ENCODE measurements at regions of chr1 and their contacts with region 1.

Region 1: DNA sequence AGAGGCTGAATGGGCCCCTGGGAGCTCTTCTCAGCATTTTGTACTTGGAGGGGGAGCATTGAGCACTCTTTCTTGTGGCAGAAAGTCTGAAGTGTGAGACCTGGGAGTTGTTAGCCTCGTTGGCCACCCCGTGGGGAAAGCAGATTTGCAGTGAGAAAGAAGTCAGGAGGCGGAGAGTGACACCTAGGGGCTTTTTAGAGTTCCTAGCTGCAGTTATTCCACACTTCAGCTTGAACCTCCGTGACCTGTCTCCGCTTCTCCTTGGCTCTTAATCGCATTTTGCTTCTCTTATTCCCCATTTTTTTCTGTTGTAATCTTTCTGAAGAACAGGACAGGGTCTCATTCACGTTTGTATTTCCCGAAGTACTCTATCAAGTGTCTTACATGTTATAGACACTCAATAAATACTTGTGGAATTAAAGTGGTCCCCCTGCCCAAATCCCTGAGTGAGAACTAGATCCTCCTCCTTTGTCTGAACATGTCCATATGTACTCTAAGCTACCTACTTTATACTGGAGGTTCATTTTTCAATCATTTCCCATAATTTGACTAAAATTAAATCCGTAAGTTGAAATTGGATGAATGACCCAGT is 14.5 kb upstream of the C1orf141 start:
- DNase-seq: peak; percentile 68 to 76
- H3K4me3 ChIP-seq: no peak overlapping the region
- H3K27ac ChIP-seq: no peak overlapping the region
- H3K4me1 ChIP-seq: peaks cover 5% of the 10 kb centered on the region in 2 donors
- H3K27me3 ChIP-seq: no peaks in the 10 kb centered on the region
- CTCF ChIP-seq: peak; percentile 39 to 99 (median 78)
- POLR2A ChIP-seq: no peak

Region 2: DNA sequence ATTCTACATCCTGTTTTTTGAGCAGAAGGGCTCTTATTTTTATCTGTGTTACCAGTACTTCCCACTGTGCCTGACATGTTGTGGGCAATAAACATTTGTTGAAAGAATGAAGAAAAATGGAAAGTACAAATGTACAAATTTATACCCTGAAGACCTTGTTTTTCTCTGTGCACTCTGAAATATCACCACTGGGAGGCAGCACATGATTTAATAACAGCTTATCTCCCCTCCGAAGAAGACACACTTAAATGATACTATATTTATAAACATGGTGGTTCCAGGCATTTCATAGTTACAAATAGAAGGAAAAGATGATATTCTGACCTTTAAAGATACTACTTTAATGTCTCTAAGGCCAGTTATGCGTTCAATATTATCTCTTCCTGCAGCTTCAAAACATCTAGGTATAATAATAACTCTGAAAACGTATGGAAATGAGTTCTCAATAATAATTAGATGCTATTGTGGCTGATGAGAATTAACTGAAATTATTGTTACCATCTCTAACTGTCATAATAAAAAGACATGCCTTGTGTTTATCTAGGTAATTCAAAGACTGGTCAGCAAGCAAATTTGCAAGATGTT is 384.2 kb before region 1 on chr1:
- intact Hi-C with region 1: loop called (anchors 5 kb)
- DNase-seq: peak; percentile 7 to 8
- H3K4me3 ChIP-seq: no peak overlapping the region
- H3K27ac ChIP-seq: no peak overlapping the region
- H3K4me1 ChIP-seq: no peaks in the 10 kb centered on the region
- H3K27me3 ChIP-seq: no peaks in the 10 kb centered on the region
- CTCF ChIP-seq: peak in 4 of 6 experiments; percentile 39 to 65 (median 62)
- POLR2A ChIP-seq: no peak

Region 3: DNA sequence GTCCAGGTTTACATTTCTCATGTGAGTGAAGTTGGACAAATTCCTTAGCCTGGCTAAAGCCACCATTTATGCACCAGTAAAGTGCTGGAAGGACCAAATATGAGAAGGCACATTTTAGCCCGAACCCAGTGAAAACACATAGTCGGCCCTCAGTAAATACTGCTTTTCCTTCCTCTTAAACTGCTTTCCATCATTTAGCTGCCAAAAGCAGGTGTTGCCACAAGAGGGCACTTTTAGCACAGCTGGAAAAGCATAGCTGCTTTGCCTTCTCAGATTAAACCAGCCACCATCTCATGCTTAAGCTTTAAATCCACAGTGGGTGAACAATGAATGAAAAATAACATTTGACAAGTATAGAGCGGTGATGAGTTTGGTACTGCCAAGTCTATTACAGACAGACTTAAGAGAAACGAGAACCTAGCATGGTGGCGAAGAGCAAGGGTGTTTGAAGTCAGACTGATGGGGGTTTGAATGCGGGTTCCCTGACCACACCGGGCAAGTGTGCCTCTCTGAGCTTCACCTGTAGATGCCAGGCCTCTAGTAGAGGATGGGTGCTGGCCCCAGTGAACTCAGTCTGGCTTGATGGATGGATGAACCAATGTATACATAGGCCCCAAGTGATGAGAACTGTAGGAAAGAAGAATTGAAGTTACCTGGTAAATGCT is 153.1 kb before region 1 on chr1:
- intact Hi-C with region 1: loop called (anchors 5 kb)
- DNase-seq: peak; percentile 64 to 75
- H3K4me3 ChIP-seq: no peak overlapping the region
- H3K27ac ChIP-seq: no peak overlapping the region
- H3K4me1 ChIP-seq: peaks cover 5 to 8% of the 10 kb centered on the region in 2 donors
- H3K27me3 ChIP-seq: no peaks in the 10 kb centered on the region
- CTCF ChIP-seq: peak; percentile 31 to 92 (median 74)
- POLR2A ChIP-seq: no peak

Region 4: GRCh38 chr1:67020304-67020703 is 129.0 kb before region 1 on chr1:
- intact Hi-C with region 1: no loop called
- DNase-seq: no peak
- H3K4me3 ChIP-seq: no peak overlapping the region
- H3K27ac ChIP-seq: peak overlapping the region; percentile 53 to 83 (median 71)
- H3K4me1 ChIP-seq: peaks cover 25 to 33% of the 10 kb centered on the region in 2 donors
- H3K27me3 ChIP-seq: no peaks in the 10 kb centered on the region
- CTCF ChIP-seq: no peak
- POLR2A ChIP-seq: no peak

Region 5: GRCh38 chr1:67058761-67059160 is 90.5 kb before region 1 on chr1:
- intact Hi-C with region 1: loop called (anchors 5 kb)
- DNase-seq: no peak
- H3K4me3 ChIP-seq: no peak overlapping the region
- H3K27ac ChIP-seq: no peak overlapping the region
- H3K4me1 ChIP-seq: no peaks in the 10 kb centered on the region
- H3K27me3 ChIP-seq: no peaks in the 10 kb centered on the region
- CTCF ChIP-seq: no peak
- POLR2A ChIP-seq: no peak

Region 6: GRCh38 chr1:67227196-67227595 is 77.9 kb after region 1 on chr1:
- intact Hi-C with region 1: no loop called
- DNase-seq: no peak
- H3K4me3 ChIP-seq: no peak overlapping the region
- H3K27ac ChIP-seq: no peak overlapping the region
- H3K4me1 ChIP-seq: no peaks in the 10 kb centered on the region
- H3K27me3 ChIP-seq: no peaks in the 10 kb centered on the region
- CTCF ChIP-seq: no peak
- POLR2A ChIP-seq: no peak

Region 7: DNA sequence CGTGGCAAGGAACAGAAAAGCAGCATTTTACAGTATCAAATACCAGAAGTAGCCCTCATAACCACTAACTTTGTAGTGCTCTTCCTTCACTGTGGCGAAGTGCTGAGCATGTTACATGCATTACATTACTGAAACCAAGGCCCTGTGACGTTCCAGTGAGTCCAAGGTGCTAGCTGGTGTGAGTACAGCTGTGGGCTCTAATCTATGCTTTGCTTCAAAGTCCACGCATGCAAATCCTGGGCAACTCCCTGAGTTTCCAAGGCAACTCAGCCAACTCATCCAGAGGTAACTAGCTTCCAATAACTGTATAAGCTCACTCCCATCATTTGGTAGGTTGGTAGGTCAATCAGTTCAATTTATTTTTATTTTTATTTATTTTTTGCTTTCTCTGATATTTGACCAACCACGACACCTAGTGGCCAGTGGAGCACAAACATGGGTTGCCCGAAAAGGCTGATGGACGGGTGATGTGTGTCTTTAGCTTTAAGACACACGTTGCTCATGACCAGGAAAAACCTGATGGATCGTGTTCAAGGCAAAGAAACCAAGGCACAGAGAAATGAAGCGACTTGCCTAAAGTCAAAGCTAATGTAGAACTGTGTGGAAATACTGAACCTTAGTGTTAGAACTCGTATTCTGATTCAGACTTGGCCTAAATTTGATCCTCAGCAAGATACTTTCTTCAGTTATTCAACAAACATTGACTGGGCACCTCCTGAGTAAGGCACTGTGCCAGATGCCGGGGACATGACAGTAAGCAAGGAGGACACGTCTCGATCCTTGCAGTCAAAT is 611.0 kb after region 1 on chr1:
- intact Hi-C with region 1: no loop called
- DNase-seq: peak; percentile 65 to 74
- H3K4me3 ChIP-seq: no peak overlapping the region
- H3K27ac ChIP-seq: peak overlapping the region; percentile 67 to 90 (median 80)
- H3K4me1 ChIP-seq: peaks cover 28 to 55% of the 10 kb centered on the region in 2 donors
- H3K27me3 ChIP-seq: no peaks in the 10 kb centered on the region
- CTCF ChIP-seq: peak; percentile 64 to 95 (median 74)
- POLR2A ChIP-seq: no peak